ENCODE measurements at regions of chr17 and their contacts with region 1.

Region 1: DNA sequence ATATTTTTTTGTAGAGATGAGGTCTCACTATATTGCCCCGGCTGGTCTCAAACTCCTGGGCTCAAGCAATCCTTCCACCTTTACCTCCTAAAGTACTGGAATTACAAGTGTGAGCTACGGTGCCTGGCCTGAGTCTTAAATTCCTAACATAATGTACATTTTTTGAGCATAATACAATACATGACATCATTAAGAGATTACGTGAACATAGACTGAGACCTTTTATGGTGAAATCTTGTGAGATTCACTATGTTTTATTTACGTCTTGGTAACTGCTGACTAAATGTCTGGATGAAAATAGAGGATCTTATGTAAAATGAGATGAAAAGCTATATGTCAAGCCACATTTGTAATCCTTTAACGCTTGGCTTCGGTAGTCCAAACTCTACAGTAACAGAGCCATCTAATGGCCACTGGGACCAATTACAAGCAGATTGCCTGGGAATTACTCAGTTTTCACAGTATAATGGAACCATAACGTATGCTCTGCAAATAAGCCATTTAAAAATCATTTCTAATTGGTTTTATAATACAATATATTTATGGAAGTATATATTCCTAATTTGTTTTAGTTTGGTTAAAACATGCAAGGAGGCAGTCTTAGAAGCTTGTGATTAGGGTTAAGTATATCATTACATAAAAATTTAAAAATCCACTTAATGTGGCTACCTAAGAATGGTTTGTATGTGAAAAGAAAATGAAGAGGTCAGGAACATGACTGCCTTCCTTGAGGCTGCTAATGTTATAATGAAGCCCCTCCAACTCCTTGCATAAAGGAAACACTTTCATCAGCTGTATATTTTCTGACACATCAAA is 8.1 kb upstream of the EFCAB13 start:
- DNase-seq: no peak
- ATAC-seq: peak; percentile 79

Region 2: GRCh38 chr17:47229535-47230443 is 85.9 kb before region 1 on chr17:
- intact Hi-C with region 1: loop called (anchors 5 kb)
- DNase-seq: peak; percentile 92
- ATAC-seq: peak; percentile 88

Region 3: GRCh38 chr17:47373002-47373401 is 57.3 kb after region 1 on chr17:
- intact Hi-C with region 1: no loop called
- DNase-seq: no peak
- ATAC-seq: no peak

Measured in sciatic nerve (tissue), 2 donors.